Natural killer cell (primary cell): ENCODE measurements at regions of chr17 and their contacts with region 1.

Region 1: DNA sequence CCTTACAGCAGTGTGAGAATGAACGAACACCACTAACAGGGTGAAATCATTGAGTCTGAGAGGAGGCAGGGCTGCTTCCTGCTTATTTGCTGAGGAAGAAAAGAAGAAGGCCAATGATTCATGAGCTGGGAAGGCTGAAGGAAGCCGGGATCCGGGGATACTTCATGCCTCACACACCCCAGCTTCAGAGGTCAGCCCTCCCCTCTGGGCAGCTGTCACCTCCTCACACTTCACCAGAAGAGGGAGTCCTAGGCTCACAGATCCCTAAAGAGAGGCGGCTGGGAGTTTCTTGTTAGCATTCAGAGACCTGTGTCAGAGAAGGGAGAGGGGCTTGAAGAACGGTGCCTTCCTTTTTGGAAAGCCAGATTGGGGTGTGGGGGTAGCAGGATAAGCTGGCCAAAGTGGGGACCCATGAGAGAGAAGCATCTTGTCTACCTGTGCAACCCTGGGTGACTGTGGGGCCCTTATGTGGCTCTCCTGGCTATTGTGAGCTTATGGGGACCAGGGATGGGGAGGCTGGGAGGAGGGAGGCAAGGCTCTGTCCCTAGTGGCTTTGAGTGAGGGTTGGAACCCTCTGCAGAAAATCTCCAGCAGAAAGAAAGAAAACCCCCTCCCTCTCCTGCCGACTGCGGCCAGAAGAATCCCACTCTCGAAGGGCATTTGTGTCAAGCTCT is 94.6 kb downstream of the RGS9 start:
- DNase-seq: peak in 1 of 2 donors; percentile 71
- ATAC-seq: peak; percentile 38 to 54 (median 48)
- H3K4me3 ChIP-seq: no peak overlapping the region
- H3K4me3 Mint-ChIP-seq: no peak overlapping the region
- H3K27ac ChIP-seq: no peak overlapping the region
- H3K27ac Mint-ChIP-seq: no peak overlapping the region
- H3K4me1 ChIP-seq: peaks cover 19% of the 10 kb centered on the region
- H3K4me1 Mint-ChIP-seq: peaks cover 31 to 34% of the 10 kb centered on the region in 2 donors
- H3K27me3 ChIP-seq: no peaks in the 10 kb centered on the region
- H3K27me3 Mint-ChIP-seq: peaks cover 6 to 7% of the 10 kb centered on the region in 2 donors
- CTCF ChIP-seq: peak; percentile 43

Region 2: DNA sequence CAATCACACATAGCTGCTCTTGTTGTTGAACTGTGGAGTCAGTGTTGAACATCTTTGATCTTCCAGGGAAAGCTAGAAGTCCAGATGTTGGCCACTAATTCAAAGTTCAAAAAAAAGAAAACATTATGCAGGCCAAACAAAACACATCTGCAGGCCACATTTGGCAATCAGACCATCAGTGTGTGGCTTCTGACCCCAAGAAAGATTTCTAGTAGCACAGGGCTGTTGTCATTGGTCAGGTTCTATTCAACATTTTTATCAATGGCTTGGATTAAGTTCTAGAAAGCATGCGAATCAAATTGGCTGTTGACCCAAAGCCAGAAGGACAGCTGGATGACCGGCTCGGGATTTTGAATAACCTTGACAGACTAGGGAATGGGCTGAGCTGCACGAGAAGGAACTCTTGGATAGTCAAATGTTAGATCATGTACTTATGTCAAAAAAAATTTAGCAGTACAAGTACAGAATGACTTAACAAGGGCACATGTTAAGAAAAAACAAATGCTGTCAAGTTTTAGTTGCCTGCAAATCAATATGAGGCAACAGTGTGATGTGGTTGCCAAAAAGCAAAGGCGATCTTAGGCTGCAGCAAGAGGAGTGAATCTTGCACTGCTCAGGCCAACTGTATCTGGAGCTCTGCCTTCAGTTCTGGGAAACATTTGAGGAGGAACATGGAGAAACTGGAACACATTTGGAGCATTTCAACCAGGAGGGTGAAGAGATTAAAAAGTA is 93.0 kb after region 1 on chr17:
- intact Hi-C with region 1: no loop called
- DNase-seq: no peak
- ATAC-seq: no peak
- H3K4me3 ChIP-seq: no peak overlapping the region
- H3K4me3 Mint-ChIP-seq: no peak overlapping the region
- H3K27ac ChIP-seq: no peak overlapping the region
- H3K27ac Mint-ChIP-seq: no peak overlapping the region
- H3K4me1 ChIP-seq: no peaks in the 10 kb centered on the region
- H3K4me1 Mint-ChIP-seq: no peaks in the 10 kb centered on the region
- H3K27me3 ChIP-seq: no peaks in the 10 kb centered on the region
- H3K27me3 Mint-ChIP-seq: peaks cover 18 to 19% of the 10 kb centered on the region in 2 donors
- CTCF ChIP-seq: no peak

Region 3: GRCh38 chr17:65556014-65556909 is 324.5 kb after region 1 on chr17:
- intact Hi-C with region 1: loop called (anchors 1 kb)
- DNase-seq: peak; percentile 79 to 92
- ATAC-seq: peak; percentile 49 to 62 (median 62)
- H3K4me3 ChIP-seq: peak overlapping the region; percentile 6
- H3K4me3 Mint-ChIP-seq: no peak overlapping the region
- H3K27ac ChIP-seq: peak overlapping the region; percentile 41
- H3K27ac Mint-ChIP-seq: no peak overlapping the region
- H3K4me1 ChIP-seq: peaks cover 4% of the 10 kb centered on the region
- H3K4me1 Mint-ChIP-seq: peaks cover 6% of the 10 kb centered on the region in 2 donors
- H3K27me3 ChIP-seq: peaks cover 8% of the 10 kb centered on the region
- H3K27me3 Mint-ChIP-seq: peaks cover 9 to 12% of the 10 kb centered on the region in 2 donors
- CTCF ChIP-seq: peak; percentile 88

Region 4: DNA sequence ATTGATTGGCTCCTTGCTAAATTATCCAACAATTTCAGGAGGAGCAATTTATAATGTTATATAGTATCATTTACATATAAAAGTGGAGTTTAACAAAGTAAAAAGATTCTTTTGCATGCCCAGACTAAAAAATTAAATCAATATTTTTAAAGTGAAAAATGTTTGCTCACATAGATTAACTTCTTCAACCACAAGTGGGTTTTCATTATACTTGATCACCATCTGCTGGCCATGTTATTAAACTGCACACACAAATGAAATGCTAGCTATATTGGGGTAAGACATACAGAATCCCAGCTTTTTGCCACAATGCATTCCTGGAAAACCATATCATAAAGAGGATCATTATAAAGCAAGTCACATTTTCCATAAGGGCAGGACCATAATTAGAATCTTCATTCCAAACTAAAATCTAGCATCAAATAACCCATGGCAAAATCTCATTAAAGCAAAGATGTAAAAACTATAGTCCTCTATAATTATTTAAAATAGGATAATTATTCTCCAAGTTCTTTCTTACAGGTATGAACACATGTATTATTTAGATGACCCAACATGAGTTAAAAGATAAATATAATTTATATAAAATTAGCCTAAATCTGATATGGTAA is 933.8 kb after region 1 on chr17:
- intact Hi-C with region 1: loop called (anchors 1 kb)
- DNase-seq: peak in 1 of 2 donors; percentile 75
- ATAC-seq: peak in 2 of 3 donors; percentile 66 to 67
- H3K4me3 ChIP-seq: no peak overlapping the region
- H3K4me3 Mint-ChIP-seq: no peak overlapping the region
- H3K27ac ChIP-seq: no peak overlapping the region
- H3K27ac Mint-ChIP-seq: no peak overlapping the region
- H3K4me1 ChIP-seq: no peaks in the 10 kb centered on the region
- H3K4me1 Mint-ChIP-seq: no peaks in the 10 kb centered on the region
- H3K27me3 ChIP-seq: no peaks in the 10 kb centered on the region
- H3K27me3 Mint-ChIP-seq: no peaks in the 10 kb centered on the region
- CTCF ChIP-seq: peak; percentile 72